T-cell (primary cell): ENCODE measurements at regions of chr16 and their contacts with region 1.

Region 1: DNA sequence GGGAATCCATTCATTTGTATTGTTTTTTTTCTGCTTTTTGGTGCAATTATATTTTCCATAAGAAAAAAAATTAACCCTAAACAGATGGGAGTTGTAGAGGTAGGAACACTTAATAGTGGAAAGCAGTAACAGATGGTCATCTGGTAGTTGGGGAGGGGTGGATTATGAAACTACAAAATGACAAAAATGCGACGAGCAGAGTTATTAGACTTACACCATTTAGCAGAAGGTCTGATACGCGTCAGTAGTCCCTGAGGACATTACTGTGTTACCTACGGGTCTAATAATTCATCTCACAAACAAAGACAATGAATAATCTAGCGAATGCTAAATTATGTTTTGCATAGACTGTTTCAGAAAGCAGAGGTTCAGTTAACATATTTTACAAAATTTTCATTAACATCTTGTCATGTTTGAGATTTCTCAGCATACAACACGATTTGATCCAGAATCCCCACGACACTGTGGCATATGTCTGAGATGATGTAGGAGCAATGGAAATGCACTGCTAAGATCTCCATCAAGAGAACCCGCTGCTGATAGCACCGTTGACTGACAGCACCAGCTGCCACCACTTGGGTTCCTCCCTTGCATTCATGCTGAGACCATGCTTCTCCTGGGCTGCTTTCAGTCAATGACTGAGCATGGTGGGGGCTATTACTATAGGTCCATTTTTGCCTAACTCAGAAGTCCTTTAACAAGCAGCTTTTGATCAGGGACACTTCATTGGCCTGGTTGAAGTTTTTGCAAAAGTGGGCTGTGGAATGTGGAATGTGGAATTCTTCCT is 182.2 kb upstream of the CPHXL start:
- DNase-seq: no peak
- ATAC-seq: no peak
- H3K4me3 ChIP-seq: no peak overlapping the region
- H3K4me3 Mint-ChIP-seq: no peak overlapping the region
- H3K27ac ChIP-seq: no peak overlapping the region
- H3K27ac Mint-ChIP-seq: no peak overlapping the region
- H3K4me1 ChIP-seq: no peaks in the 10 kb centered on the region
- H3K4me1 Mint-ChIP-seq: peaks cover 0 to 1% (median 0%) of the 10 kb centered on the region in 3 donors
- H3K27me3 ChIP-seq: no peaks in the 10 kb centered on the region
- H3K27me3 Mint-ChIP-seq: peaks cover 3 to 7% of the 10 kb centered on the region in 2 donors

Region 2: GRCh38 chr16:75333721-75334163 is 574.8 kb before region 1 on chr16:
- CTCF ChIA-PET with region 1: interaction called in 1 of 2 experiments, 11 read pairs
- POLR2A ChIA-PET with region 1: no interaction called
- DNase-seq: no peak
- ATAC-seq: peak in 2 of 4 experiments; percentile 23 to 36
- H3K4me3 ChIP-seq: no peak overlapping the region
- H3K4me3 Mint-ChIP-seq: peak overlapping the region in 1 of 3 donors; percentile 40
- H3K27ac ChIP-seq: no peak overlapping the region
- H3K27ac Mint-ChIP-seq: peak overlapping the region; percentile 54 to 67
- H3K4me1 ChIP-seq: peaks cover 7 to 10% of the 10 kb centered on the region in 2 experiments
- H3K4me1 Mint-ChIP-seq: peaks cover 18 to 23% (median 19%) of the 10 kb centered on the region in 3 donors
- H3K27me3 ChIP-seq: no peaks in the 10 kb centered on the region
- H3K27me3 Mint-ChIP-seq: no peaks in the 10 kb centered on the region